ENCODE measurements at regions of chr16 and their contacts with region 1.

Region 1: GRCh38 chr16:66483689-66484481 is 56.8 kb downstream of the BEAN1 start:
- DNase-seq: peak; percentile 73
- H3K4me3 Mint-ChIP-seq: no peak overlapping the region
- H3K27ac Mint-ChIP-seq: no peak overlapping the region
- H3K4me1 Mint-ChIP-seq: peaks cover 33% of the 10 kb centered on the region
- H3K27me3 Mint-ChIP-seq: no peaks in the 10 kb centered on the region
- CTCF ChIP-seq: peak; percentile 96

Region 2: GRCh38 chr16:66455970-66456369 is 27.9 kb before region 1 on chr16:
- CTCF ChIA-PET with region 1: interaction called, 10 read pairs
- POLR2A ChIA-PET with region 1: no interaction called
- intact Hi-C with region 1: no loop called
- DNase-seq: no peak
- H3K4me3 Mint-ChIP-seq: no peak overlapping the region
- H3K27ac Mint-ChIP-seq: no peak overlapping the region
- H3K4me1 Mint-ChIP-seq: no peaks in the 10 kb centered on the region
- H3K27me3 Mint-ChIP-seq: peaks cover 7% of the 10 kb centered on the region
- CTCF ChIP-seq: no peak

Region 3: GRCh38 chr16:66511615-66512500 is 28.0 kb after region 1 on chr16:
- CTCF ChIA-PET with region 1: interaction called, 11 read pairs
- POLR2A ChIA-PET with region 1: interaction called, 8 read pairs
- intact Hi-C with region 1: loop called (anchors 5 kb)
- DNase-seq: peak; percentile 79
- H3K4me3 Mint-ChIP-seq: peak overlapping the region; percentile 40
- H3K27ac Mint-ChIP-seq: peak overlapping the region; percentile 85
- H3K4me1 Mint-ChIP-seq: peaks cover 62% of the 10 kb centered on the region
- H3K27me3 Mint-ChIP-seq: no peaks in the 10 kb centered on the region
- CTCF ChIP-seq: peak; percentile 20

Region 4: DNA sequence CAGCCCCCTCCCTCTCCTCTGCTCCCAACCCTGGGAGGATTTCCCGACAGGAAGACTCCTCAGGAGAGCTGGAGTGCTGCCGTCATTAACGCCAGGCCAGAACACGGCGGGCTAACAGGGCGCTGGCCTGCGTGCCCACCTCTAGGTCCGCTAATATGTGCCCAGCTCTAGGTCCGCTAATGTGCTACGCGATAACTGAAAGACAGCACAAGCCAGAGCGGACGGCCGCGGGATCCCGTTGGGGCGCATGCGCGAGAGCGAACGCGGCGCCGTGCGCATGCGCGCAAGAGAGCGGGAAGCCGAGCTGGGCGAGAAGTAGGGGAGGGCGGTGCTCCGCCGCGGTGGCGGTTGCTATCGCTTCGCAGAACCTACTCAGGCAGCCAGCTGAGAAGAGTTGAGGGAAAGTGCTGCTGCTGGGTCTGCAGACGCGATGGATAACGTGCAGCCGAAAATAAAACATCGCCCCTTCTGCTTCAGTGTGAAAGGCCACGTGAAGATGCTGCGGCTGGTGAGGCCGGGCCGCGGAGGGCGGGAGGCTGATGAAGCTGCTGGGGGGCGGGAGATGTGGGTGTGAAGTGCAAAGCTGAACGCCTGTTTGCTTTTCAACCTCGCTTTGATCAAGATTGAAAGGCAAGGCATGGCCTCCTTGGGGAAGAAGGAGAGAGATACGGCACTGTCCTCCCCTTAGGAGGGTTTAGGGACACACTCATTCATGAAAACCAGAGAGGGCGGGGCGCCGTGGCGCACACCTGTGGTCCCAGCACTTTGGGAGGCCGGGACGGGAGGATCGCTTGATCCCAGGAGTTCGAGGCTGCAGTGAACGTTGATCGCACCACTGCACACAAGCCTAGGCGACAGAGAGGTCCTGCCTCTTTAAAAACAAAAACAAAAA is 68.6 kb after region 1 on chr16 and contains the start of gene CKLF:
- CTCF ChIA-PET with region 1: interaction called, 3 read pairs
- POLR2A ChIA-PET with region 1: no interaction called
- intact Hi-C with region 1: loop called (anchors 2 kb)
- DNase-seq: peak; percentile 88
- H3K4me3 Mint-ChIP-seq: peak within 1 kb of the TSS; percentile 89
- H3K27ac Mint-ChIP-seq: peak within 1 kb of the TSS; percentile 86
- H3K4me1 Mint-ChIP-seq: peaks cover 52% of the 10 kb centered on the region
- H3K27me3 Mint-ChIP-seq: no peaks in the 10 kb centered on the region
- CTCF ChIP-seq: no peak
- total RNA-seq, gene CKLF: 41.3 and 57.8 TPM in 2 replicates

Region 5: DNA sequence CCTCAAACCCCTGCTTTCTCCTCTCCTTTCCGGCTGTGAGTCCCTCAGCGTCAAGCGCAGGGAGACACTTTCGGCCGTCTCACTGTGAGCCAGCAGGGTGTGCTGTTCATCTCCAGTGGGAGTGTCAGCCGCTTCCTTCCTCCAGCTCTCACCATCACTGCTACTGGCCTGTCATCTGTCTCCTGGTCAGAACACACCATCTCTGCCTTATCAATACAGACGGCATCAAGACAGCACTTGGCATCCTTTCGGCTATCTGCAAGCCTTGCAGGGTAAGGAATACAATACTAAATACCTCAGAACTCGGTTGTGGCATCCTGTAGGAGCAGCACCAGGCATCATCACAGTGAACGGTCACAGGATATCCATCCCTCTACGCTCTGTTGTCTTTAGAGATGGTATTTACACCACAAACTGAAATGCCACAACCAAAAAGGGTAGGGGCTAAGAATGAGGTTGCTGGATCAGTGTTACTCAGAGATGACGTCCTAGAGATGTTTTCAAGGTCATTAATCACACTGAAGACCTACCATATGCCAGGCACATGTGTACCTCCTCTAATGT is 233.3 kb after region 1 on chr16:
- CTCF ChIA-PET with region 1: no interaction called
- POLR2A ChIA-PET with region 1: no interaction called
- intact Hi-C with region 1: no loop called
- DNase-seq: peak; percentile 26
- H3K4me3 Mint-ChIP-seq: no peak overlapping the region
- H3K27ac Mint-ChIP-seq: no peak overlapping the region
- H3K4me1 Mint-ChIP-seq: peaks cover 10% of the 10 kb centered on the region
- H3K27me3 Mint-ChIP-seq: no peaks in the 10 kb centered on the region
- CTCF ChIP-seq: no peak

Measured in MCF 10A (cell line).